Activated CD8-positive, alpha-beta memory T cell treated with anti-CD3 and anti-CD28 coated beads, Interleukin-2, amount 10 ng/mL, durations not matched to agents 7 days and 5 days (primary cell): ENCODE measurements at regions of chr17 and their contacts with region 1.

Region 1: GRCh38 chr17:76397687-76398487 is 13.5 kb downstream of the SPHK1 start:
- DNase-seq: peak; percentile 91
- ATAC-seq: peak; percentile 90
- H3K4me3 Mint-ChIP-seq: no peak overlapping the region
- H3K27ac Mint-ChIP-seq: no peak overlapping the region
- H3K4me1 Mint-ChIP-seq: no peaks in the 10 kb centered on the region
- H3K27me3 Mint-ChIP-seq: no peaks in the 10 kb centered on the region

Region 2: DNA sequence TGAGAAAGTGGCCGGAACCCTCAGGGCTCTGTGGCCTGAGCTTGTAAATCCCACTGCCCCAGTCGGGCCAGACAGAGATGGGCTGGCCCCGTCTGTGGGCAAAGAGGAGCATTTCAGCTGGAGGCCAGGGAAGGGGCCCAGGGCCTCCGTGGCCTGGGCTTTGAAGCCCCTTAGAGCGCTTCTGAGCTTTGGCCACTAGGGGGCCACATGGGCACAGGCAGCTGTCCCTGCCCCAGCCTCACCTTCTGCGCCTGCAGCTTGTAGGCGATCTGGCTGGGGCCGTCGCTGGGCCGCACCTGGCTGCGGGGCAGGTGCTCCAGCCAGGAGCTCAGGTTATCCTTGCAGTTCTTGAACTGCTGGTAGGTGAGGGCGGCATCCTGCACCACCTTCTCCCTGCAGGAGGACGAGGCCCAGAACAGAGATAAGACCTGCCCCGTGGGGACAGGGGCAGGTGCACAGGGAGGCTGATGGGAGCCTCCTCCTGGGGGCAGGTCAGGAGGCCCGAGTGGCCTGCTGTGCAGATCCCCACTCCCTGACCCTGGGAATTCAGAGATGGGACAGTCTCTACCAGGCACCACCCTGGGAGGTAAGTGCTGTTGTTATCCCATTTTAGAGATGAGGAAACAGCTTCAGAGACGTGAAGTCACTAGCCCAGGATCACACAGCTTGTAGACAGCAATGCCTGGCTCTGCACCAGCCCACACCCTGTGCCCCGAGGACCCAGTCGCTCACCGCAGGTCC is 383.5 kb before region 1 on chr17:
- CTCF ChIA-PET with region 1: interaction called, 11 read pairs
- DNase-seq: peak; percentile 85
- ATAC-seq: peak; percentile 98
- H3K4me3 Mint-ChIP-seq: no peak overlapping the region
- H3K27ac Mint-ChIP-seq: no peak overlapping the region
- H3K4me1 Mint-ChIP-seq: peaks cover 4% of the 10 kb centered on the region
- H3K27me3 Mint-ChIP-seq: no peaks in the 10 kb centered on the region

Region 3: GRCh38 chr17:76262732-76263344 is 135.0 kb before region 1 on chr17:
- CTCF ChIA-PET with region 1: no interaction called
- DNase-seq: no peak
- ATAC-seq: no peak
- H3K4me3 Mint-ChIP-seq: peak overlapping the region; percentile 20
- H3K27ac Mint-ChIP-seq: peak overlapping the region; percentile 91
- H3K4me1 Mint-ChIP-seq: peaks cover 40% of the 10 kb centered on the region
- H3K27me3 Mint-ChIP-seq: no peaks in the 10 kb centered on the region

Region 4: GRCh38 chr17:76314392-76315227 is 83.3 kb before region 1 on chr17:
- CTCF ChIA-PET with region 1: interaction called, 20 read pairs
- DNase-seq: no peak
- ATAC-seq: no peak
- H3K4me3 Mint-ChIP-seq: no peak overlapping the region
- H3K27ac Mint-ChIP-seq: peak overlapping the region; percentile 16
- H3K4me1 Mint-ChIP-seq: peaks cover 3% of the 10 kb centered on the region
- H3K27me3 Mint-ChIP-seq: no peaks in the 10 kb centered on the region

Region 5: GRCh38 chr17:76370261-76370993 is 27.5 kb before region 1 on chr17:
- CTCF ChIA-PET with region 1: interaction called, 20 read pairs
- DNase-seq: no peak
- ATAC-seq: no peak
- H3K4me3 Mint-ChIP-seq: no peak overlapping the region
- H3K27ac Mint-ChIP-seq: no peak overlapping the region
- H3K4me1 Mint-ChIP-seq: no peaks in the 10 kb centered on the region
- H3K27me3 Mint-ChIP-seq: no peaks in the 10 kb centered on the region

Region 6: DNA sequence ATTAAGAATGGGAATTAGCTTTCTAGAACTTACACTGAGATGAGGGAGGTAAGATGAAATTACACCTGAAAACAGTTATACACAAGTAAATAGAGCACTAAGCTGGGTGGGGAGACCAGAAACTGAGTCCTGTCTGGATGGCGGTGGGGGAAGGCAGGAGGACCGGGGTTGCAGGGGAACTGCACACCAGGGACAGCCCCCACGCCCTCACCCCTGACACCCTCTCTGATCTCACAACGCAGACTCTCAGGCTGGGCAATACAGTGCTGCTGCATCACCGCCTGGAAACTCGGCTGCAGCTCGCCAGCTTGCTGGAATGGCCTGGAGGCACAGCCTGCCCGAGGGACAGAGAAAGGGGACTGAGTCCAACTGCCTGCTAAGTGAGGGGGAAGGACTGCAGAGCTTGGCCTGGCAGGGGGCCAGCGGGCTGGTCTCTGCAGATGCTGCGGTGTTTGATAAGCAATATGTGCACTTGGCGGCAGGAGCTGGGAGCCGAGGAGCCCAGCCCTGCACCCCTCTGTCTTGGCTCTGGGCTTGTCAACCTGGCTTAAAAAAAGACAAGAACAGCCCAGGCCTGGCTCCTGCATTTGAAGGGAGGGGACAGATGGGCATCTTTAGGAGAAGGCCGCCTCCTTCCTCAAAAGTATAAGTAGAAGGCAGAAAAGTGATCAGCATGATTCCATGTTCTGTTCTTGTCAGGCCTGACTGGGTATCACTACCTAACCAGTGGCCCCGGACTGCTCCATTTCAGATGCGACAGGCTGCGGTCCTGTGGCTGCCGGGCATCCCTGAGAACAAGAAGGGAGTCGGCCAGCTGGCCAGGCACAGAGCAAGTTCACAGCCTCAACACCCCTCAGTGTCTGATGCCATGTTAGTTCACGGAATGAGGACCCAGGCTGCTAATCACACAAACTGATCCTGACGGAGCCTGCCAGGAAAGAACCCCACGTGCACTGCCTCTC is 16.7 kb after region 1 on chr17:
- CTCF ChIA-PET with region 1: interaction called, 16 read pairs
- DNase-seq: no peak
- ATAC-seq: no peak
- H3K4me3 Mint-ChIP-seq: no peak overlapping the region
- H3K27ac Mint-ChIP-seq: no peak overlapping the region
- H3K4me1 Mint-ChIP-seq: no peaks in the 10 kb centered on the region
- H3K27me3 Mint-ChIP-seq: no peaks in the 10 kb centered on the region

Region 7: DNA sequence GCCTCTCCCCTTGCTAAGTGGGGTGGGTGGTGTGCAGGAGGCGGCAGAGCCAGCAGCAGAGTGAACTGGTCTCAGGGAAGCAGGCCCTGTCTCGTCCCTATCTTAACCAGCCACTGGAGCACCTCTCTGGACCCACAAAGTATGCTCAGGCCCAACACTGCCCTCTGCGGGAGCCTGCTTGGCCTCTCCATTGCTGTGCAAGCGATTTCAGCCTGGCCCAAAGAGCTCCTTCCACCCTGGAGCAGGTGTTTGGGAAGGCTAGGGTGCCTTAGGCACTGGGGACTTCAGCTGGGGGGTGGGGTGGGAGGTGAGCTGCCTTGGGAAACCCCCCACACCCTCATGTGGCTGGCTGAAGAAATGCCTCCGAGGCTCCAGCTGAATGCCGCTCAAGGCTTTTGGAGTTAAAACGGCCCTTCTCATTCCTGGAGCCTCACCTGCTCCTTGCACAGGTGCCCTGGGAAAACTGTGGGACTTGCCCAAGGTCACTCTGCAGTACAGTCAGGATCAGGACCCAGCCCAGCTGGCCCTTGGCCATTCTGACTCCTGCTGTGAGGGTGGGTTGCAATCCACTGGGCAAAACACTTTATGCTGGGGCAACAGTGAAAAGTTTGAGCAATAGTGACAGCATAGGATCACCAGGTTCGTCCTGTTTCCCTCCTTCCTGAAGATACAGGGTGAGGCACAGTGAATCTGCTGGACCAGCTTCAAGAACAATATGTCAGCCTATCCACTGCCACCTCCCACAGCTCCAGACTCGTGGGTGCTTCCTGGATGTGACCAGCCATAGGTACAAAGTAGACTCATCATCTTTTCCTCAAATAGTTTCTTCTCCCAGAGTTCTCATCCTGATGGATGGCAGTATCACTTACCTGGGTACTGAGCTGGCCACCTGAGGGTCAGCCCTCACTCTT is 60.9 kb after region 1 on chr17:
- CTCF ChIA-PET with region 1: interaction called, 15 read pairs
- DNase-seq: no peak
- ATAC-seq: peak; percentile 25
- H3K4me3 Mint-ChIP-seq: no peak overlapping the region
- H3K27ac Mint-ChIP-seq: no peak overlapping the region
- H3K4me1 Mint-ChIP-seq: no peaks in the 10 kb centered on the region
- H3K27me3 Mint-ChIP-seq: peaks cover 16% of the 10 kb centered on the region